Activated CD4-positive, alpha-beta memory T cell treated with anti-CD3 and anti-CD28 coated beads, Interleukin-2, amount 10 ng/mL, durations not matched to agents 7 days and 5 days (primary cell): ENCODE measurements at regions of chr2 and their contacts with region 1.

Region 1: GRCh38 chr2:27683390-27684071 is 19.8 kb downstream of the SLC4A1AP start:
- DNase-seq: peak; percentile 90
- H3K4me3 Mint-ChIP-seq: no peak overlapping the region
- H3K27ac Mint-ChIP-seq: peak overlapping the region; percentile 90
- H3K4me1 Mint-ChIP-seq: peaks cover 47% of the 10 kb centered on the region
- H3K27me3 Mint-ChIP-seq: no peaks in the 10 kb centered on the region

Region 2: DNA sequence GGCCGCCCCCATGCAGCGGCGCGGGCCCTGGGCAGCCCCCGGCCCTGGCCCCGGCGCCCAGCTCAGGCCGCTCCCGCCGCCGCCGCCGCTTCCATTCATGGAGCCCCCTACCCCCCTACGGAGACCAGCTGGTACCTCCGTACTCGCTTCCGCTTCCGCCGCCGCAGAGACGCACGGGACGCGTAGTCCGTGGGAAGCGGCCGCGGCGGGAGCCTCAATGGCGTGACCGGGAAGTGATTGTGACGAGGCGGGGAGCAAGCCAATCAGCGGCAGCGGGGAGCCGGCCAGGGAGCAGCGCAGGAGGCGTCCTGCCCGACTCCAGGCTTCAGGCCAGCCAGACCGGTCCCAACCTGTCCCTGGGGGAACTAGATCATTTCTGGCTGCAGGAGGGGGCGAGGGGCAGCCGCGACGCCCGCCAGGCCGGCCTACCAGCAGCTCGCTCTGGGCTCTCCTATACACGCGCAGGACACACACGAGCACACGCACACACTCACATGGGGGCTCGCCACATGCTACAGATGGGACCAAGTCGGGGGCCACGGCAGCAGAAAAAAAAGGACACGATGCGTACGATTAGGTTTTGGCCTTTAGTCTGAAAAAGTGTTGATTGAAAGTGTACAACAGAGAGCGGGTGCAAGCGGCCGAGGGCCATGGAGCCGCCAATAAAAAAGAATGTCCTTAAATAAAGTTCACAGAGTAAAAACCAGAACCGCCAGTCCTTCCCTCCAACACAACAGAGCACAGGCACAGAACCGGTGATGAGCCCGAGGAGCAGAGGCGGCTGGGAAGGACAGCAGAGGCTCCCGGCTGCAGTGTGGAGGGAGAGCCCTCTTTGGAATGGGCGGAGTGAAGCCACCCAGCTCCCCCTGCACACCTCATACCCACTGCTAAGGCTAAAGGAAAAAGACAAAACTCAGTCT is 302.6 kb before region 1 on chr2 and contains the start of gene ZNF513:
- CTCF ChIA-PET with region 1: interaction called, 14 read pairs
- POLR2A ChIA-PET with region 1: interaction called, 10 read pairs
- DNase-seq: peak; percentile 93
- H3K4me3 Mint-ChIP-seq: peak within 1 kb of the TSS; percentile 87
- H3K27ac Mint-ChIP-seq: peak within 1 kb of the TSS; percentile 92
- H3K4me1 Mint-ChIP-seq: peaks cover 37% of the 10 kb centered on the region
- H3K27me3 Mint-ChIP-seq: no peaks in the 10 kb centered on the region
- total RNA-seq, gene ZNF513: 15.6 to 16.7 TPM

Region 3: GRCh38 chr2:27428213-27428977 is 255.1 kb before region 1 on chr2 and contains the start of gene NRBP1:
- CTCF ChIA-PET with region 1: interaction called, 36 read pairs
- POLR2A ChIA-PET with region 1: interaction called, 5 read pairs
- DNase-seq: peak; percentile 93
- H3K4me3 Mint-ChIP-seq: peak within 1 kb of the TSS; percentile 98
- H3K27ac Mint-ChIP-seq: peak within 1 kb of the TSS; percentile 92
- H3K4me1 Mint-ChIP-seq: peaks cover 26% of the 10 kb centered on the region
- H3K27me3 Mint-ChIP-seq: no peaks in the 10 kb centered on the region
- total RNA-seq, gene NRBP1: 103 to 104 TPM

Region 4: DNA sequence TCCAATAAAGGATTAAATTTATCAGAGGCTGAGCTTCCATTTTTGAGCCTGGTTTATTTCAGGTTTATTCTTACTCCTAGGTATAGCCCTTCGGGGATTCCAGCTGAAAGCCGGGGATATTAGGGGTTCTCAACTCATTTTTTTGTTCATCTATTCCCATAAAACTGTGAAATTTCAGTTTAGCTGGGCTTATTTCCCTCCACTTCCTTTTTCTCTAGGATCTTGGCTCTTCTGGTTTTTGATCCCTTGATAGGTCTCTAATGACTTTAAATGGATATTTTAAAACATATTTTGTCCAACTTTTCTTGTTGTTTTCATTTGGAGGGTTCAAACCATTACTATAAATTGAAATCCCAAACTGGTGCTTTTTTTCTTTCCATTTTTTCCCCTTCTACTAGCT is 124.3 kb before region 1 on chr2:
- CTCF ChIA-PET with region 1: no interaction called
- POLR2A ChIA-PET with region 1: no interaction called
- DNase-seq: no peak
- H3K4me3 Mint-ChIP-seq: no peak overlapping the region
- H3K27ac Mint-ChIP-seq: no peak overlapping the region
- H3K4me1 Mint-ChIP-seq: no peaks in the 10 kb centered on the region
- H3K27me3 Mint-ChIP-seq: peaks cover 16% of the 10 kb centered on the region

Region 5: DNA sequence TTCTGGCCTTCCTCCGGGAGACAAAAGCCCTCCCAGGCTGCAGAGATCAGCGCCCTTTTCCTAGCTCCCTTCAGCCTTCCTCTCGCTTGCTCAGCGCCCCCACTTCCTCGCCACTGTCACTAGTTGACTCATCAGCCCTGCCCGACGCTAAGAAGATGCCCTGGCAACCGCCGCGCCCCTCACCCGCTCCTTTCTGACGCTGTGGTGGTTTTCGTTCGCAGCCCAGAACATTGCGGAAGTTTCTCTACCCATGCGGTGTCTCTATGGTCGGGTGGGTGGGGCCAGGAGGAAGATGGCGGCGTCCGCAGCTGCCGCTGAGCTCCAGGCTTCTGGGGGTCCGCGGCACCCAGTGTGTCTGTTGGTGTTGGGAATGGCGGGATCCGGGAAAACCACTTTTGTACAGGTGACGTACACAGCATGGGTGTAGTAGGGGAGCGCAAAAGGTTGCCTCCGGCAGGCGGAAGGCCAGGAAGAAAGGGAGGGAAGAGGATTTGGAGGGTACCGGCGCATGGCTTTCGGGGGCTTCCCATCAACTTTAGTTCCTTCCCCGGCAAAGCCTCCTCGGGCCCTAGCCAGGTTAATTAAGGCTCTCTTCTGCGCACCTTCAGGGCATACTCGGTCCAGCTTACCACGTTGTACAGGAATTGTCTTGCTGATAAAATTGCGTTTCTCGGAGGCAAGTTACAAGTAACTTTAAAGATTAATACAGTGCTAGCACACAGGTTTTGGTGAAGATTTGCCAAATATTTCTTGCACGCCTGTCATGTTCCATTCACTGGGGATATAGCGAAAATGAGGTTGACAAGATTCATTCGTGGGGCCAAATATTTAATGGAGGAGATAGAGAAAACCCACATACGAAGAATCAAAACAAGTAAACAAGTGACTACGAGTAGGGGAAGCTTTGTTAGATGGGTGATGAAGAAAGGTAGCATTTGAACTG is 54.5 kb before region 1 on chr2 and contains the starts of genes CCDC121 and GPN1:
- CTCF ChIA-PET with region 1: interaction called, 9 read pairs
- POLR2A ChIA-PET with region 1: interaction called, 23 read pairs
- DNase-seq: peak; percentile 98
- H3K4me3 Mint-ChIP-seq: no peak within 1 kb of the TSS
- H3K27ac Mint-ChIP-seq: no peak within 1 kb of the TSS
- H3K4me1 Mint-ChIP-seq: peaks cover 16% of the 10 kb centered on the region
- H3K27me3 Mint-ChIP-seq: no peaks in the 10 kb centered on the region
- total RNA-seq, gene CCDC121: 0.78 to 0.90 TPM
- total RNA-seq, gene GPN1: 45.0 to 45.8 TPM

Region 6: GRCh38 chr2:27672723-27673486 is 10.6 kb before region 1 on chr2:
- CTCF ChIA-PET with region 1: interaction called, 15 read pairs
- POLR2A ChIA-PET with region 1: no interaction called
- DNase-seq: no peak
- H3K4me3 Mint-ChIP-seq: no peak overlapping the region
- H3K27ac Mint-ChIP-seq: no peak overlapping the region
- H3K4me1 Mint-ChIP-seq: peaks cover 4% of the 10 kb centered on the region
- H3K27me3 Mint-ChIP-seq: no peaks in the 10 kb centered on the region

Region 7: GRCh38 chr2:27703638-27704341 is 20.3 kb after region 1 on chr2:
- CTCF ChIA-PET with region 1: interaction called, 46 read pairs
- POLR2A ChIA-PET with region 1: interaction called, 6 read pairs
- DNase-seq: peak; percentile 89
- H3K4me3 Mint-ChIP-seq: no peak overlapping the region
- H3K27ac Mint-ChIP-seq: no peak overlapping the region
- H3K4me1 Mint-ChIP-seq: peaks cover 31% of the 10 kb centered on the region
- H3K27me3 Mint-ChIP-seq: no peaks in the 10 kb centered on the region

Region 8: GRCh38 chr2:27977608-27978312 is 294.2 kb after region 1 on chr2:
- CTCF ChIA-PET with region 1: no interaction called
- POLR2A ChIA-PET with region 1: no interaction called
- DNase-seq: no peak
- H3K4me3 Mint-ChIP-seq: no peak overlapping the region
- H3K27ac Mint-ChIP-seq: peak overlapping the region; percentile 17
- H3K4me1 Mint-ChIP-seq: peaks cover 28% of the 10 kb centered on the region
- H3K27me3 Mint-ChIP-seq: no peaks in the 10 kb centered on the region